ENCODE measurements at regions of chr10 and their contacts with region 1.

Region 1: GRCh38 chr10:4767033-4767814 is 58.8 kb upstream of the AKR1E2 start:
- DNase-seq: peak; percentile 24
- H3K4me3 ChIP-seq: no peak overlapping the region
- H3K27ac ChIP-seq: no peak overlapping the region
- H3K4me1 ChIP-seq: no peaks in the 10 kb centered on the region
- H3K27me3 ChIP-seq: no peaks in the 10 kb centered on the region
- CTCF ChIP-seq: peak; percentile 61

Region 2: DNA sequence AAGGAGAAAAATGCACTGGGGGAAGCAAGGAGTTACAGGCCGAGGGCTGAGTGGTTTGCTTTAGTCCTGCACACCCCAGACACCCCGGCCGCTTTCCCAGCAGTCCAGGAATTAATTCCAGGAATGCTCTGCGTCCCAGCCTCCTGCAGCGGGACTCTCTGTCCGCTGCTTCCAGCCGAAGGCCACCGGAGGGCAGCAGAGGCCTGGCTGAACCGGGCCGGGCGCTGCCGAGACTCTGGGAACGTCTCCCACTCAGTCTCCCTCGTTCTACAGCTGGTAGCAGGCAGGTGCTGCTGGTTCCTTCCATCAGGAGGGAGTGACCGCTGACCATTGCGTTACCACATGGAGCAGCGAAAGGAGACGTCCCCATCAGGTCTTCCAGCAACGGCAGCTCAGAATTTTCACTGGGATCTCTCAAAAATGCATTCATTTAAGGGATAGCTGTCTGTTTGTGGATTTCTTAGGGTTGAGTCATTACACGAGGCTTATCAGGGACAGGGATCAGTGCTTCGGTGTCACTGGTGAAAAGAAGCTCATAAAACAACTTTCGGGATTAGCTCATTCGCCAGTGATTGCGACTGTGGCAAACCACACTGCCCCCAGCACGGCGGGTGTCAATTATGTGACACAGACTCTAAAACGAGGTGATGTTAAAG is 1569.7 kb before region 1 on chr10:
- intact Hi-C with region 1: loop called (anchors 5 kb)
- DNase-seq: peak; percentile 78
- H3K4me3 ChIP-seq: no peak overlapping the region
- H3K27ac ChIP-seq: no peak overlapping the region
- H3K4me1 ChIP-seq: no peaks in the 10 kb centered on the region
- H3K27me3 ChIP-seq: no peaks in the 10 kb centered on the region
- CTCF ChIP-seq: peak; percentile 82

Region 3: DNA sequence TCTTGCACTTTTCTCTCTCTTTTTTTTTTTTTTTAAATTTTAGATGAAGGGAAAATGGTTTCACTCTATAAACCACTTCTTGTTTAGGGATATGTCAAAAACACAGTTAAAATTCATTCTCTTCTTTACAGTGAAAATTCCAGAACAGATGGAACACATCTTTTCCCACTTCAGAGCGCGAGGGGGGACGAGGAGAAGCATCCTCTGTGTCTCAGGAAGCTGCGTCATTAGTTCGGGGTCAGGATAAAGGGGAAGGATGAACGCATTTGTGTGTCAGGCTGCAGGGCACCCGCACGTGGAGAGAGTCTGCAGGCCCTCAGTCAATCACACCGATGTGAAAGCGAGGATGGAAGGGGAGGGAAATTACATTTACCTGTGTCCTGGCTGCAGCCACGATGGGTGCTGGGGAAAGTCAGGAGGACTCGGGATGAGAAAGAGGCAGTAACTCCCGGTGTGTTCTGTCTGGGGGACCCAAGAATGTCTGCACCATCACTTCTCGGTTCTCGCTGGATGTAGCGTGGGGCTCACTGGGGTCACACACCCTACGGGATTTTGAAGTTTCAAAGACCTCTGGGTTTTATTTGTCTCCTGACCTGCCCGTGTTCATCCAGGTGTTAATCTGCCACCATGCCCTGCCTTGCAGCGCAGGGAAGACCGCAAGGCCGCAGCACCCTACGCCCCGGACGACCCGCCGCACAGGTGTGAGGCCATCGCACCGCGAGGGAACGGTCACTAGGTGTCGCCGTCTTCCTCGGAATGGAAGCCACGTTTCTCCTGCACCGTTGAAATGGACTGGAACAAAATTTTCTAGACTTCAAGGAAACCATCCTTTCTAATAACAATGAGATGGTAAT is 1527.9 kb before region 1 on chr10:
- intact Hi-C with region 1: loop called (anchors 10 kb)
- DNase-seq: peak; percentile 74
- H3K4me3 ChIP-seq: no peak overlapping the region
- H3K27ac ChIP-seq: no peak overlapping the region
- H3K4me1 ChIP-seq: peaks cover 3% of the 10 kb centered on the region
- H3K27me3 ChIP-seq: no peaks in the 10 kb centered on the region
- CTCF ChIP-seq: peak; percentile 93

Region 4: GRCh38 chr10:4470231-4470835 is 296.9 kb before region 1 on chr10:
- intact Hi-C with region 1: no loop called
- DNase-seq: no peak
- H3K4me3 ChIP-seq: no peak overlapping the region
- H3K27ac ChIP-seq: no peak overlapping the region
- H3K4me1 ChIP-seq: no peaks in the 10 kb centered on the region
- H3K27me3 ChIP-seq: no peaks in the 10 kb centered on the region
- CTCF ChIP-seq: no peak

Region 5: DNA sequence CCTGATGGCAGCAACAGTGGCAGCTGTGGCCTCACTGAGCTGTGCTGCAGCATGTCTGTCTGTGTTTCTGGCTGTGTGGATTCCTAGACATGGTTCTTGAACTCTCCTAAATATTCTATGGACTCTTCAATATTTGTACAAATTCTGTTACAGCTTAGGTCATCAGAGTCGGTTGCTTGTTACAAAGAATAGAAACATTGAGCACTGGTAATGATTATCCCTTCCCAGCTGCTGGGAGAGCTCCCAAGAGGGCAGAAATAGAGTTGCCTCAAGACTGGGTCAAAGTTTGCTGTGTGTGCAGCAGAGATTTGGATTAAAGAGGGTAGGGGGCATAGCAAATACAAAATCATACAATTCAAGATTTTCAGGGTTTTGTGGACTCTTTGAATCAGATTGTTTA is 278.3 kb before region 1 on chr10:
- intact Hi-C with region 1: no loop called
- DNase-seq: no peak
- H3K4me3 ChIP-seq: no peak overlapping the region
- H3K27ac ChIP-seq: no peak overlapping the region
- H3K4me1 ChIP-seq: no peaks in the 10 kb centered on the region
- H3K27me3 ChIP-seq: no peaks in the 10 kb centered on the region
- CTCF ChIP-seq: no peak

Region 6: DNA sequence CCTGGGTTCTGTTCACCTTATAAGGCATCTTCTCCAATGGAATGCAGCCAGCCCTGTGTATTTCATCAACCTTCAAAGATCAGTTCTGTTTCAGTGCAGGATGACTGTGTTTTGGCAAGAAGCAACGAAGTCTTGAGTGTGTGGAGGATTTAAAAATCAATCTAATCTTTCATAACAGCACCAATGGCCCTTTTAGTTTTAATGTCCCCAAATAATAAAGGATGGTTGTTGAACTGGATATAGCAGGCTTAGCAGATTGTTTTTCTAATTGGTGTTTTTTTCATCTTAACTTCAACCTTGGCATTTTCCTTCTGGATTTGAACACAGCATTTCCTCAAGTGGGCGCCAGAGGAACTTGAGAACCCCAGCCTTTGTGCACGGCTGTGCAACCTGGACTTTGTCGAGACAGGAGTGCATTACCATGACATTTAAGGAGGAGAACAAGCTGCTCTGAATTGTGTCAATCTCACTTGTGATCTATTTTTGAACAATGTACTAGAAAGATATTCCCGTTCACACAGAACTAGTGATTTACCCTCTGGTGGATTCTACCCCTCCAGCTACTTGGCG is 254.5 kb before region 1 on chr10:
- intact Hi-C with region 1: loop called (anchors 5 kb)
- DNase-seq: peak; percentile 39
- H3K4me3 ChIP-seq: no peak overlapping the region
- H3K27ac ChIP-seq: no peak overlapping the region
- H3K4me1 ChIP-seq: no peaks in the 10 kb centered on the region
- H3K27me3 ChIP-seq: no peaks in the 10 kb centered on the region
- CTCF ChIP-seq: peak; percentile 32

Region 7: DNA sequence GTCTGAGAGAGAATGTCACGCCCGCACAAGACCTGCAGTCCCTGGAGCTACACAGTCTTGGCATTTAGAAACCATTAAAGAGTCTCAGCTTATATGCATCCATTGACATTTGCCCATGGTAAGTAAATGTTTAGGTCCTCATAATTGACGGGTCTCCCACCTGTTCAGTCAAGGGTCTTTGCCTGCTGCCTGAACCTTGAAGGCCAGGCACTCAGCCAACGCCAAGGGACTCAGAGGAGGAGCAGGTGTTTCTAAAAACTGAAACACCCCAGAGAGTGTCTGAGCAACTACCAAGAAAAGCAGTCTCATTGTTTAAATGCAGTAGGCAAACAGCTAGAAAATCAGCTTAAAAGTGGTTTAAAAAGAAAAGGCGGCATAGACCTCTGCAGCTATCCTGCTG is 205.9 kb before region 1 on chr10:
- intact Hi-C with region 1: no loop called
- DNase-seq: no peak
- H3K4me3 ChIP-seq: no peak overlapping the region
- H3K27ac ChIP-seq: no peak overlapping the region
- H3K4me1 ChIP-seq: no peaks in the 10 kb centered on the region
- H3K27me3 ChIP-seq: no peaks in the 10 kb centered on the region
- CTCF ChIP-seq: no peak

Region 8: DNA sequence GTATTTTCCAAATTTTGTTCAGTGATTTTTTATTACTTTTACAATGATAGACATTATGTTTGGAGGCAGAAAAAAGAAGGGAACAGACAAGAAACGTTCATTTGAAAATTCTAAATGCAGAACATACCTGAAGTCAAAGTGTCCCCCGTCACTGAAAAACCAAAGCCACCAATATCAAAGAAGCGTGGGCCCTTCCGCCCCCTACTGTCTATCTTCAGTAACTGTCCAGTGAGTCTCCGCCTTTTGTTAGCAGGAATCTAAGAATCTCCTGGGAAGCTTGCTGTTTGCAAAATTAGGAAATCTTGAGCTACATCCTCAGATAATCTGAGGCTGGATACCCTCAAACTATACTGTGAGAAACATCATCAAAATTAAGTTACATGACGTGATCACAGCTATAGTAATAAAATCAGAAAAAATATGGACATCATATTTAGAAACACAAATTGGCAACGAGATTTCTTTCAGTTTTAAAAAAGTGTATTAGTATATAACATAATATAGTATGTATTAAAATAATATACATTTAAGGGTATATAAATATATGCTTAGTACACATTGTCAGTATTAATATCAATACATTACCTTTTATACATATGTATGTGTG is 110.5 kb before region 1 on chr10:
- intact Hi-C with region 1: loop called (anchors 10 kb)
- DNase-seq: peak; percentile 68
- H3K4me3 ChIP-seq: no peak overlapping the region
- H3K27ac ChIP-seq: no peak overlapping the region
- H3K4me1 ChIP-seq: no peaks in the 10 kb centered on the region
- H3K27me3 ChIP-seq: no peaks in the 10 kb centered on the region
- CTCF ChIP-seq: peak; percentile 82